ENCODE measurements at regions of chr3 and their contacts with region 1.

Region 1: GRCh38 chr3:113019182-113020137 is 28.7 kb downstream of the GTPBP8 start:
- DNase-seq: peak; percentile 69 to 89 (median 74)
- ATAC-seq: peak; percentile 92
- H3K4me3 ChIP-seq: peak overlapping the region; percentile 81
- H3K4me3 Mint-ChIP-seq: peak overlapping the region; percentile 87 to 97 (median 92)
- H3K27ac ChIP-seq: peak overlapping the region; percentile 96
- H3K27ac Mint-ChIP-seq: peak overlapping the region; percentile 87 to 96 (median 91)
- H3K4me1 ChIP-seq: peaks cover 19 to 21% of the 10 kb centered on the region in 2 donors
- H3K4me1 Mint-ChIP-seq: peaks cover 44 to 87% (median 71%) of the 10 kb centered on the region in 7 donors
- H3K27me3 ChIP-seq: no peaks in the 10 kb centered on the region
- H3K27me3 Mint-ChIP-seq: no peaks in the 10 kb centered on the region

Region 2: DNA sequence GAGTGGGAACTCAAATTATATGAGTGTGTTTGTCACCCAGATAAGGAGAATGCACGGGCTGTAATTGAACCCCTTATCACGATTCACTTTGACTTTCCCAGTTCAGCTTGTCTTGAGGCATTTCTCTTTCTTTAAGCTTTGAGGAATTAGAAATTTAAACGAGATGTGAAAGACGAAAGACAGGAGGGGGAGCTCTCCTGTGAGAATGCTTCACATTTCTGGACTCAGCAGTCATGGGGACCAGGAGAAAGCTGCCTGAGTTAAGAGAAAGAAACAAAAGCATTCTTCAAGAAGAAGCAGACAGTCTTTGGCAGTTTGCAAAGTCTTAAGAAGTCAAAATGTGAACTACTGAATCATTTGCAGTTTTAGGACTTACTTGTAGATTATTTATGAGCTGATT is 1742.2 kb before region 1 on chr3:
- CTCF ChIA-PET with region 1: no interaction called
- POLR2A ChIA-PET with region 1: no interaction called
- intact Hi-C with region 1: no loop called
- DNase-seq: peak in 2 of 9 donors; percentile 4 to 23
- ATAC-seq: no peak
- H3K4me3 ChIP-seq: no peak overlapping the region
- H3K4me3 Mint-ChIP-seq: no peak overlapping the region
- H3K27ac ChIP-seq: no peak overlapping the region
- H3K27ac Mint-ChIP-seq: peak overlapping the region in 1 of 9 donors; percentile 59
- H3K4me1 ChIP-seq: no peaks in the 10 kb centered on the region
- H3K4me1 Mint-ChIP-seq: peaks cover 6 to 33% (median 24%) of the 10 kb centered on the region in 7 donors
- H3K27me3 ChIP-seq: no peaks in the 10 kb centered on the region
- H3K27me3 Mint-ChIP-seq: peaks cover 0 to 8% (median 4%) of the 10 kb centered on the region in 5 donors

Region 3: DNA sequence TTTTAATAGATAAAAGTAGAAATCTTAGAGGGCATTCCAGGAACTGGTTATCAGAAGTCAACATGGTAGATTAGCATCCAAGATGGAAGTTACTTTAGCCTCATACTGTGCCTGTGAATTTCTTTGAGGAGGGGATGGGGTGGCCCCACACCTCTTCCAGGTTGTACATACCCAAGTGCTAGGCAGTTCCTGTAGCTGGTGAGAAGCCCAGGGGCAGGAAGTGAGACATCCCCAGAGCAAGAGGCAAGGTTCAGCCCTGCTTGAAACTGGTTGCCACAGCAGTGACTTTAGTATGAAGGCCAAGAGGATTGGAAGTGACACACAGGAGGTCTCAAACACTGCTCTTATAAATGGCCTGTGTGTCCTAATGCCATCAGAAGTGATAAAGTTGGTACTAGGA is 16.8 kb before region 1 on chr3:
- CTCF ChIA-PET with region 1: interaction called, 3 read pairs
- POLR2A ChIA-PET with region 1: interaction called, 106 read pairs
- intact Hi-C with region 1: loop called (anchors 1 kb)
- DNase-seq: peak in 7 of 9 donors; percentile 27 to 53 (median 41)
- ATAC-seq: peak; percentile 50
- H3K4me3 ChIP-seq: no peak overlapping the region
- H3K4me3 Mint-ChIP-seq: peak overlapping the region in 8 of 10 donors; percentile 19 to 70 (median 48)
- H3K27ac ChIP-seq: peak overlapping the region; percentile 78
- H3K27ac Mint-ChIP-seq: peak overlapping the region; percentile 74 to 98 (median 89)
- H3K4me1 ChIP-seq: peaks cover 22 to 61% of the 10 kb centered on the region in 2 donors
- H3K4me1 Mint-ChIP-seq: peaks cover 33 to 99% (median 91%) of the 10 kb centered on the region in 7 donors
- H3K27me3 ChIP-seq: no peaks in the 10 kb centered on the region
- H3K27me3 Mint-ChIP-seq: no peaks in the 10 kb centered on the region

Region 4: DNA sequence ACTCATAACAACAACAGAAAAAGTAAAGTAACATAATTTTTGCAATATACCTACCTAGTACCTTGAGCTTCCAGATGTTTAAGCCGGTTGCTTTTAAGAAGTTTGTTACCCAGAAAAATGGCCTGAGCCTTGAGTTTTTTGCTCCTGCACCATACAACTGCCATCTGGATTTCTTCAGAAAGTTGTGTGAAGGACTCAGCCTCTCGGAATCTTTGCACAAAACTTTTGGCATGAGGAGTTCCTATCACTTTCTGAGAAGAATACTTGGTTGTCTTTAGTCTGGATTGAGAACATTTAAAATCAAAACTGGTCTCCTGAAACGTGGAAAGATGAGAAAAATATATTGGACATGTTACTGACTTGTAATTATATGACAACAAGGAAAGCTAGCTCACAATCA is 11.3 kb before region 1 on chr3:
- CTCF ChIA-PET with region 1: interaction called, 8 read pairs
- POLR2A ChIA-PET with region 1: interaction called, 106 read pairs
- intact Hi-C with region 1: loop called (anchors 1 kb)
- DNase-seq: no peak
- ATAC-seq: no peak
- H3K4me3 ChIP-seq: no peak overlapping the region
- H3K4me3 Mint-ChIP-seq: peak overlapping the region in 2 of 10 donors; percentile 34 to 81
- H3K27ac ChIP-seq: peak overlapping the region; percentile 78
- H3K27ac Mint-ChIP-seq: peak overlapping the region in 8 of 9 donors; percentile 87 to 98 (median 93)
- H3K4me1 ChIP-seq: peaks cover 13 to 59% of the 10 kb centered on the region in 2 donors
- H3K4me1 Mint-ChIP-seq: peaks cover 39 to 100% (median 97%) of the 10 kb centered on the region in 7 donors
- H3K27me3 ChIP-seq: no peaks in the 10 kb centered on the region
- H3K27me3 Mint-ChIP-seq: no peaks in the 10 kb centered on the region

Region 5: GRCh38 chr3:113211330-113212149 is 192.1 kb after region 1 on chr3 and contains the start of gene BOC:
- CTCF ChIA-PET with region 1: no interaction called
- POLR2A ChIA-PET with region 1: no interaction called
- intact Hi-C with region 1: no loop called
- DNase-seq: peak in 1 of 9 donors; percentile 32
- ATAC-seq: no peak
- H3K4me3 ChIP-seq: no peak within 1 kb of the TSS
- H3K4me3 Mint-ChIP-seq: peak within 1 kb of the TSS; percentile 35 to 83 (median 70)
- H3K27ac ChIP-seq: no peak within 1 kb of the TSS
- H3K27ac Mint-ChIP-seq: peak within 1 kb of the TSS in 1 of 9 donors; percentile 16
- H3K4me1 ChIP-seq: no peaks in the 10 kb centered on the region
- H3K4me1 Mint-ChIP-seq: peaks cover 6 to 19% (median 13%) of the 10 kb centered on the region in 7 donors
- H3K27me3 ChIP-seq: peaks cover 0 to 4% of the 10 kb centered on the region in 2 donors
- H3K27me3 Mint-ChIP-seq: peaks cover 71 to 89% (median 74%) of the 10 kb centered on the region in 5 donors
- total RNA-seq, gene BOC: 0.98 TPM in 1 of 5 experiments, not detected in the others

Region 6: DNA sequence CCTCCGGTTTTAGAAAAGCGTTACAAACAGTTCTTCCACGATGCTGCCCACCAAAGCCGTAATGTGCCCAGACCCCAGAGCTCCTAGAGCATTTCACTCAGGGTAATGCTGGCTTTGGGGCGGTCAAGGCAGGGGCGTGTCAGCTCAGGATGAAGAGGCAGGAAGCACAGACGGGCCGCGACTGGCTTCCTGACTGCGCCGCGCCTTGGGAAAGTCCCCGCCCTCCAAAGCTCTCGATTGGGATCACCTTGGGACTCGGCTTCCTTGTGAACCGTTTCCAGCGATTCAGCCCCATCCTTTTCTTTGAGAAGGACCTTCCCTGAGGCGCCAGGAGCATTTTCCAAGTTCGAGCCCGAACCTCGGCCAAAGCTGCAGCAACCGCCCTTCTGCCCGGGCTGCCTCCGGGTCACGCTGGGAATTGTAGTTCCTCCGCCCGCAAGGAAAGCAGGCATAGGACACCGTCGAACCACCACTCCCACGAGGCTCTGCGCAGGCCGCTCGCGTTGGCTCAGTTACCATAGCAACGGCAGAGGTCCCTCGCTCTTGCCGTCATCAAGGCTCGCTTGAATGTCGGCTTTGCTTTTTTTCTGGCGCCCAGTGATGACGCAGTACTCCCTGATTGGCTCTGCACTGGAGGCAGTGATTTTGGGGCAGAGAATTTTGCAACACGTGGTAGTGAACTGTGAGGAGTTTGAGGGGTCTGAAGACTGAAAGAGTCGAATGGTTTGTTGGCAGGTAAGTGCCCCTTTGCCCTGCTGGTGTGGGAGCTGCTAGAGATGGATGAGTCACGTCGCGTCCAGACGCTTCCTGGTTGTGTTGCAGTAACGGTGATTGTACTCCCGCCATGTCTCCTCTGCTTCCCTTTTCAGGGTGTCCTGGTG is 1036.9 kb after region 1 on chr3 and contains the starts of genes CCDC191 and QTRT2:
- CTCF ChIA-PET with region 1: no interaction called
- POLR2A ChIA-PET with region 1: no interaction called
- intact Hi-C with region 1: loop called (anchors 1 to 5 kb)
- DNase-seq: peak; percentile 82 to 99 (median 98)
- ATAC-seq: peak; percentile 97
- H3K4me3 ChIP-seq: peak within 1 kb of the TSS; percentile 95
- H3K4me3 Mint-ChIP-seq: peak within 1 kb of the TSS; percentile 91 to 100 (median 98)
- H3K27ac ChIP-seq: peak within 1 kb of the TSS; percentile 91
- H3K27ac Mint-ChIP-seq: peak within 1 kb of the TSS; percentile 87 to 99 (median 97)
- H3K4me1 ChIP-seq: peaks cover 10 to 12% of the 10 kb centered on the region in 2 donors
- H3K4me1 Mint-ChIP-seq: peaks cover 24 to 60% (median 55%) of the 10 kb centered on the region in 7 donors
- H3K27me3 ChIP-seq: no peaks in the 10 kb centered on the region
- H3K27me3 Mint-ChIP-seq: peaks cover 0 to 2% (median 0%) of the 10 kb centered on the region in 5 donors
- total RNA-seq, gene CCDC191: 3.9 to 8.8 (median 5.1) TPM
- total RNA-seq, gene QTRT2: 29.9 to 38.8 (median 33.8) TPM

Measured in naive thymus-derived CD4-positive, alpha-beta T cell (primary cell).